SK-N-SH (cell line): ENCODE measurements at regions of chr10 and their contacts with region 1.

Region 1: GRCh38 chr10:25701652-25702051 is 232.4 kb upstream of the MYO3A start:
- DNase-seq: peak; percentile 49
- H3K4me3 ChIP-seq: no peak overlapping the region
- H3K27ac ChIP-seq: no peak overlapping the region
- H3K4me1 ChIP-seq: no peaks in the 10 kb centered on the region
- H3K27me3 ChIP-seq: no peaks in the 10 kb centered on the region
- CTCF ChIP-seq: no peak
- EP300 ChIP-seq: no peak
- RAD21 ChIP-seq: no peak

Region 2: DNA sequence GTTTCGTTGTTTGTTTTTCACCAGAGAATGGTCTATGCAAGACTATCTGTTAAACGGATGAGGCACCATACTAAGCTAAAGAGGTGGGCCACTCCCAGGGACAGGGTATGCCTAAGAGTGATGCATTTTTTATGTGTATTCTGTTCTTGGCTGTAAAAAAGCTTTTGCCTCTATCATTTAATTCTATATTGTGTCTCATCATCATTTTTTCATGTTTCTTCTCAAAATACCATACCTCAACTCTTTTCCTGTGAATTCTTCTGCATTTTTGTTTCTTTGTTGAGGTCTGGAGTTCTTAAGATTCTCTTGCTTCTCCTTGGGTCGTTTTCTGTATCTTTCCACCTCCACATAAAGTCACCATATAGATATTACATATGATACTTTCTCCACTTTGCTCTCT is 169.4 kb before region 1 on chr10:
- CTCF ChIA-PET with region 1: no interaction called
- POLR2A ChIA-PET with region 1: no interaction called
- DNase-seq: no peak
- H3K4me3 ChIP-seq: no peak overlapping the region
- H3K27ac ChIP-seq: no peak overlapping the region
- H3K4me1 ChIP-seq: no peaks in the 10 kb centered on the region; a peak in 1 of 4 replicates
- H3K27me3 ChIP-seq: no peaks in the 10 kb centered on the region
- CTCF ChIP-seq: no peak
- EP300 ChIP-seq: no peak
- RAD21 ChIP-seq: no peak

Region 3: GRCh38 chr10:25713894-25714240 is 12.2 kb after region 1 on chr10:
- CTCF ChIA-PET with region 1: interaction called, 38 read pairs
- POLR2A ChIA-PET with region 1: no interaction called
- DNase-seq: no peak
- H3K4me3 ChIP-seq: no peak overlapping the region
- H3K27ac ChIP-seq: no peak overlapping the region
- H3K4me1 ChIP-seq: no peaks in the 10 kb centered on the region
- H3K27me3 ChIP-seq: no peaks in the 10 kb centered on the region
- CTCF ChIP-seq: no peak
- EP300 ChIP-seq: no peak
- RAD21 ChIP-seq: no peak